Calu3 (cell line): ENCODE measurements at regions of chr3 and their contacts with region 1.

Region 1: GRCh38 chr3:160999276-160999675 is 105.9 kb downstream of the B3GALNT1 start:
- DNase-seq: peak; percentile 70
- H3K4me3 Mint-ChIP-seq: no peak overlapping the region
- H3K27ac Mint-ChIP-seq: no peak overlapping the region
- H3K4me1 Mint-ChIP-seq: peaks cover 19% of the 10 kb centered on the region
- H3K27me3 Mint-ChIP-seq: no peaks in the 10 kb centered on the region
- CTCF ChIP-seq: peak; percentile 64

Region 2: GRCh38 chr3:160784848-160785247 is 214.4 kb before region 1 on chr3:
- CTCF ChIA-PET with region 1: no interaction called
- intact Hi-C with region 1: no loop called
- DNase-seq: peak; percentile 77
- H3K4me3 Mint-ChIP-seq: peak overlapping the region; percentile 54
- H3K27ac Mint-ChIP-seq: peak overlapping the region; percentile 96
- H3K4me1 Mint-ChIP-seq: peaks cover 41% of the 10 kb centered on the region
- H3K27me3 Mint-ChIP-seq: no peaks in the 10 kb centered on the region
- CTCF ChIP-seq: no peak

Region 3: DNA sequence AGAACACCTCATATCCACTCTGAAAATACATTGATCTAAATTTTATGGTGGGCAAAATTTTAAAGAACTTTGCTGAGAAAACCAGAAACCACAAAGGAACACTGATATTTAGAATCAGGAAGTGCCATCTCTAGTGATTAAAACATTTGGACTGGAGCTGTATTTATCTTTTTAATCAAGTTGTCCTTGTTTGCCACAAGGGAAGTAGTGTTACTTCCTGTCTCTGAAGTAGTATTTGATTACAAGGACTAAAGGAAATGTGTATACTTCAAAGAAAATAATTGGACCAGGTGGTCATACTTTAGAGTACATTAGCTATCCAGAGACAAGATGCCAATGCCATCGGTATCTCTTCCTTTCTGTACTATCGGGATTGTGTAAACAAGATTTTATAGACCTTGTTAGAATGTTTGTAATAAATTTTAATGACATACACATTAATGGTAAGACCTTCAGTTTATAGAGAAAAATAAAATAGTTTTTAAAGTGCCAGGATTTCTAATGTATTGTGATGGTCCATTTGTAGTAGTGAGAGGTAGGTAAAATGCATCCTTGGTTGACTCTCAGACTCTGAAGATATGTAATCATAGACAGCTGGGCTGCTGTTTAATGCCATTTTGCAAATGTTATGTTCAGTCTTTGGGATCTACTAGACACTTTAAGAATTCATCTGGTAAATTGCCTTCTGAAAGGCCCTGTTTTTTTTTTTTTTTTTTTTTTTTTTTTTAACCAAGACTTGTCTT is 26.0 kb before region 1 on chr3:
- CTCF ChIA-PET with region 1: no interaction called
- intact Hi-C with region 1: no loop called
- DNase-seq: no peak
- H3K4me3 Mint-ChIP-seq: no peak overlapping the region
- H3K27ac Mint-ChIP-seq: no peak overlapping the region
- H3K4me1 Mint-ChIP-seq: no peaks in the 10 kb centered on the region
- H3K27me3 Mint-ChIP-seq: no peaks in the 10 kb centered on the region
- CTCF ChIP-seq: no peak

Region 4: GRCh38 chr3:160987982-160988964 is 11.0 kb before region 1 on chr3:
- CTCF ChIA-PET with region 1: interaction called, 9 read pairs
- intact Hi-C with region 1: loop called (anchors 1 kb)
- DNase-seq: no peak
- H3K4me3 Mint-ChIP-seq: no peak overlapping the region
- H3K27ac Mint-ChIP-seq: peak overlapping the region; percentile 71
- H3K4me1 Mint-ChIP-seq: peaks cover 36% of the 10 kb centered on the region
- H3K27me3 Mint-ChIP-seq: no peaks in the 10 kb centered on the region
- CTCF ChIP-seq: no peak